ENCODE measurements at regions of chr1 and their contacts with region 1.

Region 1: DNA sequence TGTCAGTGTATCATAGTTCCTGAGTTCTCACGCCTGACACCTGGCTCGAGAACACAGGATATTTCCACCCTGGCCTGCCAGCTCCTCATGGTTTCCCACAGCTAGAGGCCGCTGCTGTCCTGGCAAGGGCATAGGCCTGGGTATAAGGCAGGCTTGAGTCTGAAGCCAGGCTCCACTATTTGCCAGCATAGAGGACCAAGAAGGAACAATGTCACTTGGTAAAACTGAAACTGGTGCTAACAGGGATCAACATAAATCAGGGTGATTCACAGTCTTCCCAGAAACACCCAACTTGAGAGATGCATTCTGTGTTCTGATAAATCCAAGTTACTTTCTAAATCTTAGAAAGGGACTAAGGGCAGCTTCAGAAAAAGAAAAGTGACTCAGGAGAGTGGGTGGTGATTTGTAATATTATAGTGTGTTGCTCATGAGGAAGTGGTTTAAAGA is 6.9 kb upstream of the S100A2 start:
- DNase-seq: peak in 8 of 9 donors; percentile 24 to 51 (median 41)
- ATAC-seq: peak; percentile 81
- H3K4me3 ChIP-seq: no peak overlapping the region
- H3K4me3 Mint-ChIP-seq: no peak overlapping the region
- H3K27ac ChIP-seq: no peak overlapping the region
- H3K27ac Mint-ChIP-seq: peak overlapping the region in 1 of 9 donors; percentile 56
- H3K4me1 ChIP-seq: peaks cover 0 to 9% of the 10 kb centered on the region in 2 donors
- H3K4me1 Mint-ChIP-seq: peaks cover 9 to 23% (median 16%) of the 10 kb centered on the region in 7 donors
- H3K27me3 ChIP-seq: no peaks in the 10 kb centered on the region
- H3K27me3 Mint-ChIP-seq: peaks cover 0 to 16% (median 9%) of the 10 kb centered on the region in 5 donors

Region 2: GRCh38 chr1:153339802-153340201 is 232.8 kb before region 1 on chr1:
- CTCF ChIA-PET with region 1: no interaction called
- POLR2A ChIA-PET with region 1: no interaction called
- intact Hi-C with region 1: loop called in 1 of 2 experiments (anchors 10 kb)
- DNase-seq: peak in 1 of 9 donors; percentile 22
- ATAC-seq: no peak
- H3K4me3 ChIP-seq: no peak overlapping the region
- H3K4me3 Mint-ChIP-seq: peak overlapping the region in 8 of 10 donors; percentile 7 to 63 (median 44)
- H3K27ac ChIP-seq: no peak overlapping the region
- H3K27ac Mint-ChIP-seq: peak overlapping the region in 5 of 9 donors; percentile 12 to 52 (median 32)
- H3K4me1 ChIP-seq: peaks cover 0 to 24% of the 10 kb centered on the region in 2 donors
- H3K4me1 Mint-ChIP-seq: peaks cover 20 to 50% (median 40%) of the 10 kb centered on the region in 7 donors
- H3K27me3 ChIP-seq: no peaks in the 10 kb centered on the region
- H3K27me3 Mint-ChIP-seq: peaks cover 7 to 30% (median 26%) of the 10 kb centered on the region in 5 donors

Region 3: GRCh38 chr1:153545067-153546055 is 27.2 kb before region 1 on chr1 and contains the start of gene S100A4:
- CTCF ChIA-PET with region 1: interaction called, 27 read pairs
- POLR2A ChIA-PET with region 1: interaction called, 5 read pairs
- intact Hi-C with region 1: loop called (anchors 1 kb)
- DNase-seq: peak; percentile 50 to 93 (median 89)
- ATAC-seq: peak; percentile 84
- H3K4me3 ChIP-seq: peak within 1 kb of the TSS; percentile 69
- H3K4me3 Mint-ChIP-seq: peak within 1 kb of the TSS; percentile 85 to 97 (median 88)
- H3K27ac ChIP-seq: peak within 1 kb of the TSS; percentile 79
- H3K27ac Mint-ChIP-seq: peak within 1 kb of the TSS; percentile 93 to 99 (median 98)
- H3K4me1 ChIP-seq: peaks cover 53 to 69% of the 10 kb centered on the region in 2 donors
- H3K4me1 Mint-ChIP-seq: peaks cover 62 to 87% (median 74%) of the 10 kb centered on the region in 7 donors
- H3K27me3 ChIP-seq: no peaks in the 10 kb centered on the region
- H3K27me3 Mint-ChIP-seq: no peaks in the 10 kb centered on the region
- total RNA-seq, gene S100A4: 54.0 to 766 (median 204) TPM

Region 4: GRCh38 chr1:153617675-153618074 is 45.1 kb after region 1 on chr1:
- CTCF ChIA-PET with region 1: interaction called, 4 read pairs
- POLR2A ChIA-PET with region 1: no interaction called
- intact Hi-C with region 1: loop called (anchors 1 to 5 kb)
- DNase-seq: peak in 6 of 9 donors; percentile 19 to 77 (median 41)
- ATAC-seq: peak; percentile 88
- H3K4me3 ChIP-seq: no peak overlapping the region
- H3K4me3 Mint-ChIP-seq: no peak overlapping the region
- H3K27ac ChIP-seq: no peak overlapping the region
- H3K27ac Mint-ChIP-seq: peak overlapping the region in 1 of 9 donors; percentile 28
- H3K4me1 ChIP-seq: no peaks in the 10 kb centered on the region
- H3K4me1 Mint-ChIP-seq: peaks cover 0 to 6% (median 0%) of the 10 kb centered on the region in 7 donors
- H3K27me3 ChIP-seq: no peaks in the 10 kb centered on the region
- H3K27me3 Mint-ChIP-seq: peaks cover 0 to 5% (median 0%) of the 10 kb centered on the region in 5 donors

Region 5: GRCh38 chr1:153658400-153659174 is 86.0 kb after region 1 on chr1 and contains the start of gene SNAPIN:
- CTCF ChIA-PET with region 1: no interaction called
- POLR2A ChIA-PET with region 1: no interaction called
- intact Hi-C with region 1: loop called in 1 of 2 experiments (anchors 1 kb)
- DNase-seq: peak; percentile 81 to 94 (median 88)
- ATAC-seq: peak; percentile 98
- H3K4me3 ChIP-seq: peak within 1 kb of the TSS; percentile 93
- H3K4me3 Mint-ChIP-seq: peak within 1 kb of the TSS; percentile 91 to 97 (median 94)
- H3K27ac ChIP-seq: peak within 1 kb of the TSS; percentile 90
- H3K27ac Mint-ChIP-seq: peak within 1 kb of the TSS; percentile 90 to 98 (median 91)
- H3K4me1 ChIP-seq: peaks cover 9 to 13% of the 10 kb centered on the region in 2 donors
- H3K4me1 Mint-ChIP-seq: peaks cover 8 to 26% (median 14%) of the 10 kb centered on the region in 7 donors
- H3K27me3 ChIP-seq: no peaks in the 10 kb centered on the region
- H3K27me3 Mint-ChIP-seq: no peaks in the 10 kb centered on the region
- total RNA-seq, gene SNAPIN: 10.2 to 43.5 (median 29.8) TPM

Region 6: DNA sequence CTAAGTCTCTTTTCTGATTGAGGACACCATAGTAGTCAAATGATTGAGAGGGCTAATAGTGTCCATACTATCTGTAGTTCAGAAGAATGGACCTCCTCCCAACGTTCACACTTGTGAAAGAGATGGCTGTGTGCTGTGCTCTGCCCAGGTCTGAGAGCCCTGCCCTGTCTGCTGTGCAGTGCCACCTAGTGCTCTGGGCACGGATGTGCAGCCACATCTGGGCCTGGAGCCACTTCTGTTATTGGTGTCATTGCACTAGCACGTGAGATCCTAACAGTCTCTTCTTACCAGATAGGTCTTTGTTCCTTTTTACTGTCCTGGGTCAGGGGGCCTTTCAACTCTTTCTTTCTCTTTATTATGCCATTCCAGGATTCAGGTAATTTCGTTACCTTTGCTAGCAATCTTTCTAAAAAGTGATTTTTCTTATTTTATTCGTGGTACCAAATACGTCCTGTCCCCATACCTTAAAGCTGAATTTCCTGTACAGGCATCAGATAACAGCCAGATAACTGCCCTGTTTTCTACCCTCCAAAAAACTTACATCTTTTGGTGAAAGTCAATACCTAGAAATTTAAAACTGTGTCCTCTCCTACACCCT is 176.9 kb after region 1 on chr1:
- CTCF ChIA-PET with region 1: no interaction called
- POLR2A ChIA-PET with region 1: no interaction called
- intact Hi-C with region 1: loop called (anchors 1 to 5 kb)
- DNase-seq: peak; percentile 62 to 79 (median 76)
- ATAC-seq: peak; percentile 100
- H3K4me3 ChIP-seq: no peak overlapping the region
- H3K4me3 Mint-ChIP-seq: no peak overlapping the region
- H3K27ac ChIP-seq: no peak overlapping the region
- H3K27ac Mint-ChIP-seq: peak overlapping the region in 4 of 9 donors; percentile 0 to 71 (median 8)
- H3K4me1 ChIP-seq: no peaks in the 10 kb centered on the region
- H3K4me1 Mint-ChIP-seq: peaks cover 0 to 9% (median 4%) of the 10 kb centered on the region in 7 donors
- H3K27me3 ChIP-seq: no peaks in the 10 kb centered on the region
- H3K27me3 Mint-ChIP-seq: no peaks in the 10 kb centered on the region